Left colon (tissue), 2 donors: ENCODE measurements at regions of chr17 and their contacts with region 1.

Region 1: DNA sequence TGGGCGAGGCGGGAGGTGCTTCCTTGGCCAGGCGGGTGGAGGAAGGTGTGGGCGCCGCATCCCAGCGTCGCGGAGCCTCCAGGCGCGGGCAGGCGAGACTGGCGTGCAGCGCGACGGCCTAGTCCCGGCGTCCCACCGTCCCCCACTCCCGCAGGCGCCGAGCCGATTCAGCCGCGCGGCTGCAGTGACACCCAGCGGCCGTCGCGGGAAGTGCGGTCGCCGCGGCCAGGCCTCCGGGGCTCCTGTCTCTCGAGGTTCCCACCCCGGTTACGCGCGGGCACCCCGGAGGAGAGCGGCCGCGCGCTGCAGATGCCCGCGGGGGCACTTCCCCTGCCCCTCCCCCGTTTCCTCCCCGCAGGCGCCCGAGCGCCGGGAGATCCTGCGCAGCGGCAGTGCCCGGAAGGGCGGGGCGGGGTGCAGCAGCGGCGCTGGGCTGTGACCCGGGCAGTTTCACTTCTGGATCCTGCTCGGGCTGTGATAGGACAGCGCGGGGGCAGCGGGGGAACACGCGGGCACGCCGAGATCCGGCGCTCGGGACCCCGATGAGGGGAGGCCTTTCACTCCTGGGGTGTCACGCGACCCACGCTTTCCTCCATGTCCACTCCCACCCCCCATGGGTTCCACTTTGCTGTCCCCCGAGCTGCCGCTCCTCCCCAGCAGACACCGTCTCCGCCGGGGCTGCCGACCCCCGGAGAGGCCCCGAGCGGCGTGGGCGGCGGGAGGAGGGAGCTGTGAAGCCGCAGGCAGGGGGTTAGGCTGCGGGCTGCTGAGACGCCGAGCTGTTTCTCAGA is 16.6 kb downstream of the GRB7 start:
- DNase-seq: peak; percentile 96
- ATAC-seq: peak; percentile 88

Region 2: GRCh38 chr17:39621523-39622379 is 132.6 kb before region 1 on chr17:
- intact Hi-C with region 1: loop called in 1 of 2 experiments (anchors 5 kb)
- DNase-seq: peak; percentile 70 to 90
- ATAC-seq: peak; percentile 30